GM12878 (cell line): ENCODE measurements at regions of chr10 and their contacts with region 1.

Region 1: DNA sequence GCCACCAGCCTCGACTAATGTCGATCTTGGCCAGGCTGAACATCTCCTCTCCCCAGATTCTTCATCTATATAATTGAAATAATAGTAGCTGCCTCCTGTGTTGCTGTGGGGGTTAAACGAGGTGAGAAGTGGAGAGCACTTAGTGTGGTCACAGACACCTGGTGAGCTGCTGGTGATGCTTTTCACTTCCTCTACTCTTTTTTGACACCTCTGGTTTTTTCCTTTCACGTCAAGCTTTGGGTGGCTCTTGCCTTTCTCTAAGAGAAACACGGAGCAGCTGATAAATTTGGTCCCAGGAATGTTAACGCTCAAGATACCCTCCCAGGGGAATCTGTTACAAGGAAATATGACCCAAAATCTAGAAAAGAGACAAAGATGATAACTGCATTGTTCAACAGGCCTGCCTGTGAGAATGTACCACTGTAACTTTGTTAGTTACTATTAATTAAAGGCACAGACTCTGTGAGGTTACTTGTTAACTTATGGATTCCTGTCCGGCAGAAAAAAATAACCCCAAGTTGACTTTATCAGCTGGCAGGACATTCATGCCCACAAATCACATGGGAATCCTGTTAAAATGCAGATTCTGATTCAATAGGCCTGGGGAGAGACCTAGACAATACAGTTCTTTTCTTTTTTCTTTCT is 9.5 kb upstream of the NPFFR1 start:
- DNase-seq: peak; percentile 71
- ATAC-seq: peak; percentile 96
- H3K4me3 ChIP-seq: no peak overlapping the region
- H3K27ac ChIP-seq: peak overlapping the region; percentile 41
- H3K4me1 ChIP-seq: peaks cover 16% of the 10 kb centered on the region
- H3K27me3 ChIP-seq: no peaks in the 10 kb centered on the region
- CTCF ChIP-seq: no peak
- EP300 ChIP-seq: peak; percentile 77 to 84; a peak in 3 of 4 replicates
- POLR2A ChIP-seq: no peak
- RAD21 ChIP-seq: no peak

Region 2: GRCh38 chr10:69974551-69975155 is 318.6 kb before region 1 on chr10:
- CTCF ChIA-PET with region 1: no interaction called
- POLR2A ChIA-PET with region 1: no interaction called
- RAD21 ChIA-PET with region 1: no interaction called
- SMC1A ChIA-PET with region 1: no interaction called
- in situ Hi-C with region 1: no loop called
- intact Hi-C with region 1: no loop called
- DNase-seq: no peak
- ATAC-seq: no peak
- H3K4me3 ChIP-seq: no peak overlapping the region
- H3K27ac ChIP-seq: no peak overlapping the region
- H3K4me1 ChIP-seq: no peaks in the 10 kb centered on the region
- H3K27me3 ChIP-seq: peaks cover 3% of the 10 kb centered on the region in 2 experiments; a peak in 2 of 4 replicates
- CTCF ChIP-seq: no peak
- EP300 ChIP-seq: no peak
- POLR2A ChIP-seq: no peak
- RAD21 ChIP-seq: no peak

Region 3: GRCh38 chr10:70233109-70233938 is 60.0 kb before region 1 on chr10 and contains the start of gene PPA1:
- CTCF ChIA-PET with region 1: interaction called, 3 read pairs
- POLR2A ChIA-PET with region 1: interaction called, 3 read pairs
- RAD21 ChIA-PET with region 1: no interaction called
- SMC1A ChIA-PET with region 1: interaction called, 10 read pairs
- in situ Hi-C with region 1: no loop called
- intact Hi-C with region 1: no loop called
- DNase-seq: peak; percentile 80
- ATAC-seq: peak; percentile 92
- H3K4me3 ChIP-seq: peak within 1 kb of the TSS; percentile 93
- H3K27ac ChIP-seq: peak within 1 kb of the TSS; percentile 76
- H3K4me1 ChIP-seq: no peaks in the 10 kb centered on the region
- H3K27me3 ChIP-seq: no peaks in the 10 kb centered on the region
- CTCF ChIP-seq: peak in 2 of 3 experiments; percentile 20 to 31; a peak in 3 of 6 replicates
- EP300 ChIP-seq: no peak
- POLR2A ChIP-seq: peak; percentile 95
- RAD21 ChIP-seq: no peak
- polyA plus RNA-seq, gene PPA1: 224 to 386 TPM

Region 4: GRCh38 chr10:70348228-70348850 is 55.0 kb after region 1 on chr10:
- CTCF ChIA-PET with region 1: interaction called, 10 read pairs
- POLR2A ChIA-PET with region 1: interaction called, 3 read pairs
- RAD21 ChIA-PET with region 1: interaction called, 23 read pairs
- SMC1A ChIA-PET with region 1: interaction called, 45 read pairs
- in situ Hi-C with region 1: no loop called
- intact Hi-C with region 1: no loop called
- DNase-seq: no peak
- ATAC-seq: peak; percentile 94
- H3K4me3 ChIP-seq: no peak overlapping the region
- H3K27ac ChIP-seq: no peak overlapping the region
- H3K4me1 ChIP-seq: peaks cover 11% of the 10 kb centered on the region
- H3K27me3 ChIP-seq: no peaks in the 10 kb centered on the region
- CTCF ChIP-seq: peak; percentile 61 to 65 (median 64)
- EP300 ChIP-seq: no peak
- POLR2A ChIP-seq: no peak
- RAD21 ChIP-seq: peak; percentile 68

Region 5: GRCh38 chr10:70693619-70694335 is 400.5 kb after region 1 on chr10:
- CTCF ChIA-PET with region 1: no interaction called
- POLR2A ChIA-PET with region 1: no interaction called
- RAD21 ChIA-PET with region 1: no interaction called
- SMC1A ChIA-PET with region 1: no interaction called
- in situ Hi-C with region 1: no loop called
- intact Hi-C with region 1: no loop called
- DNase-seq: no peak
- ATAC-seq: no peak
- H3K4me3 ChIP-seq: no peak overlapping the region
- H3K27ac ChIP-seq: no peak overlapping the region
- H3K4me1 ChIP-seq: no peaks in the 10 kb centered on the region
- H3K27me3 ChIP-seq: no peaks in the 10 kb centered on the region; a peak in 1 of 4 replicates
- CTCF ChIP-seq: no peak
- EP300 ChIP-seq: no peak
- POLR2A ChIP-seq: no peak
- RAD21 ChIP-seq: no peak